Gastrocnemius medialis (tissue), 4 donors: ENCODE measurements at regions of chr2 and their contacts with region 1.

Region 1: GRCh38 chr2:168687314-168687713 is 115.1 kb upstream of the NOSTRIN start:
- DNase-seq: no peak
- ATAC-seq: peak in 1 of 2 donors; percentile 54
- H3K4me3 ChIP-seq: no peak overlapping the region
- H3K27ac ChIP-seq: no peak overlapping the region
- H3K4me1 ChIP-seq: peaks cover 0 to 2% of the 10 kb centered on the region in 2 donors
- H3K27me3 ChIP-seq: no peaks in the 10 kb centered on the region
- CTCF ChIP-seq: peak; percentile 26 to 49 (median 40)
- POLR2A ChIP-seq: no peak

Region 2: GRCh38 chr2:168573128-168573903 is 114.0 kb before region 1 on chr2:
- in situ Hi-C with region 1: no loop called
- intact Hi-C with region 1: loop called (anchors 10 kb)
- DNase-seq: no peak
- ATAC-seq: no peak
- H3K4me3 ChIP-seq: no peak overlapping the region
- H3K27ac ChIP-seq: no peak overlapping the region
- H3K4me1 ChIP-seq: peaks cover 9 to 17% of the 10 kb centered on the region in 2 donors
- H3K27me3 ChIP-seq: no peaks in the 10 kb centered on the region
- CTCF ChIP-seq: no peak
- POLR2A ChIP-seq: no peak

Region 3: DNA sequence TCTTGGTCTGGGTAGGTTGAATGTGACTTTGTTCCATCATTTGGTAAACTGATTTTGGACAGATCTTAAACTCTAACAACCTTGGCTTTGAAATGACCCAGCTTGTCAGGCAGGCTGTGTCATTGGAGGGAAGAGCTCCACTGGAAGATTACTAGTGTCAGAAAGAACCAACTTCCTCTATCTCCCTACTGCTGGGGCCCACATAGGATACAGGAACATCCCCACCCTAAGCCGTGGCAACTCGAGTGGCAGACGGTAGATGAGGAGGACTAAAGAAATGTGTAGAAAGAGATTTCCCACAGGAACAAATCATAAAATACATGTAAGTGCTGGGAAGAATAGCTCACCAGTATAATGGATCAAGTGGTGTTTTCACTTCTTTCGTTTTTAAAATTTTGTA is 209.5 kb after region 1 on chr2:
- in situ Hi-C with region 1: no loop called
- intact Hi-C with region 1: no loop called
- DNase-seq: no peak
- ATAC-seq: no peak
- H3K4me3 ChIP-seq: no peak overlapping the region
- H3K27ac ChIP-seq: no peak overlapping the region
- H3K4me1 ChIP-seq: no peaks in the 10 kb centered on the region
- H3K27me3 ChIP-seq: no peaks in the 10 kb centered on the region
- CTCF ChIP-seq: no peak
- POLR2A ChIP-seq: no peak